ENCODE measurements at regions of chr11 and their contacts with region 1.

Region 1: GRCh38 chr11:42870480-42870879 is 441.3 kb upstream of the API5 start:
- DNase-seq: no peak
- ATAC-seq: no peak
- H3K4me3 ChIP-seq: no peak overlapping the region
- H3K27ac ChIP-seq: no peak overlapping the region
- H3K4me1 ChIP-seq: no peaks in the 10 kb centered on the region
- H3K27me3 ChIP-seq: no peaks in the 10 kb centered on the region
- CTCF ChIP-seq: no peak
- EP300 ChIP-seq: no peak
- POLR2A ChIP-seq: no peak
- RAD21 ChIP-seq: no peak

Region 2: DNA sequence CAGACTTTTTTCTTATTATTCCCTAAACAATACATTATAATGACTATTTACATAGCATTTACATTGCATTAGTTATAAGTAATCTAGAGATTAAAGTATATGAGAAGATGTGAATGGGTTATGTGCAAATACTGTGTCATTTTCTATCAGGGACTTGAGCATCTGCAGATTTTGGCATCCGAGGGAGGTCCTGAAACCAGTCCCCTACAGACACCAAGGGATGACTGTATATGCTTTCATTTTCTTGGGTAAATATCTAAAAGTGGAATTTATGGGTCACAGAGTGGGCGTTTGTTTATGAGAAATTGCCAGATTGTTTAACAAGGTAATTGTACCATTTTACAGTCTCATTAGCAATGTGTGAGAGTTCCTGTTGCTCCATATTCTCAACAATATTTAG is 13.1 kb before region 1 on chr11:
- CTCF ChIA-PET with region 1: interaction called, 3 read pairs
- POLR2A ChIA-PET with region 1: no interaction called
- RAD21 ChIA-PET with region 1: no interaction called
- SMC1A ChIA-PET with region 1: interaction called, 10 read pairs
- in situ Hi-C with region 1: no loop called
- intact Hi-C with region 1: no loop called
- DNase-seq: no peak
- ATAC-seq: no peak; the same call in 2 of the 3 replicates
- H3K4me3 ChIP-seq: no peak overlapping the region
- H3K27ac ChIP-seq: no peak overlapping the region
- H3K4me1 ChIP-seq: no peaks in the 10 kb centered on the region
- H3K27me3 ChIP-seq: no peaks in the 10 kb centered on the region
- CTCF ChIP-seq: no peak
- EP300 ChIP-seq: no peak; a peak in 1 of 4 replicates
- POLR2A ChIP-seq: no peak
- RAD21 ChIP-seq: no peak

Measured in GM12878 (cell line).